CD14-positive monocyte (primary cell): ENCODE measurements at regions of chr19 and their contacts with region 1.

Region 1: GRCh38 chr19:8001995-8002849 is 3.2 kb downstream of the ELAVL1 start:
- DNase-seq: peak; percentile 79 to 87 (median 84)
- H3K4me3 ChIP-seq: peak overlapping the region; percentile 3 to 83 (median 40)
- H3K4me3 Mint-ChIP-seq: peak overlapping the region; percentile 80 to 96
- H3K27ac ChIP-seq: peak overlapping the region; percentile 65 to 77
- H3K27ac Mint-ChIP-seq: peak overlapping the region; percentile 83 to 96 (median 90)
- H3K4me1 ChIP-seq: peaks cover 28 to 45% of the 10 kb centered on the region in 2 donors
- H3K4me1 Mint-ChIP-seq: peaks cover 41% of the 10 kb centered on the region
- H3K27me3 ChIP-seq: no peaks in the 10 kb centered on the region
- H3K27me3 Mint-ChIP-seq: peaks cover 0 to 3% (median 0%) of the 10 kb centered on the region in 3 donors
- CTCF ChIP-seq: peak; percentile 96

Region 2: DNA sequence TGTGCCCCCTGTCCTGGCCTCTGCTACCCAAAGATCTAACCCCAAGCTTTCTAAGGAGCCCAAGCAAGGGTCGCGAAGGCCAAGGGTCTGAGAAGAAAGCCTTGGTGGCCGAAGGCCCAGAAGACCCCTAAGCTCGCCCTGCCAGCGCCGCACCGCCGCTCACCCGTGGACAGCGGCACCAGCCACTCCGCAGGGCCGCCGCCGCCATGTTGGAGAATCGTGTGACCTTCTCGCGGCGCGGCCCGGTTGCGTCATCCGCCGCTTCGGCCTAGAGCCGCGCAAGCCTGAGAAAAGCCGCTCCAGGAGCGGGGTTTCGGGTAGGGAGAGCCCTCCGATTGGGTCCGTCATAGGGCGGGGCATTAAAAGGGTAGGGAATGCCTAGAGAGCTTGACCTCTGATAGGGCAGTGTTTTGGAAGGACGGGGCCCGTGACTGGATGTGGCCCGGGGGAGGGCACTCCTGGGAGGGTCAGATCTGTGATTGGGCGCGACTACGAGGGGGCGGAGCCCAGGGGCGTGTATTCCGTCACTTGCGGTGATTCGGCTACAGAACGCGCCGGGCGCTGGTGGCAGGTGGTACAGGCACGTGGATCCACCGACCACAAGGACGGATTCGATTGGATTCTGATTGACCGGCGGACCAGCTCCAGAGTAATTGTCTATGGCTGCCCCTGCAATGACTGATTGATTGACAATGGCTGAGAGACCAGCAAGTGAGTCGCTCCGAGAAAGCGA is 58.6 kb before region 1 on chr19 and contains the start of gene TIMM44:
- intact Hi-C with region 1: loop called (anchors 2 to 5 kb)
- DNase-seq: peak; percentile 99 to 100 (median 99)
- H3K4me3 ChIP-seq: peak within 1 kb of the TSS; percentile 44 to 84 (median 84)
- H3K4me3 Mint-ChIP-seq: peak within 1 kb of the TSS; percentile 87 to 92
- H3K27ac ChIP-seq: peak within 1 kb of the TSS; percentile 90 to 91
- H3K27ac Mint-ChIP-seq: peak within 1 kb of the TSS; percentile 94 to 98 (median 97)
- H3K4me1 ChIP-seq: peaks cover 8 to 21% of the 10 kb centered on the region in 2 donors
- H3K4me1 Mint-ChIP-seq: peaks cover 18% of the 10 kb centered on the region
- H3K27me3 ChIP-seq: no peaks in the 10 kb centered on the region
- H3K27me3 Mint-ChIP-seq: peaks cover 0 to 3% (median 0%) of the 10 kb centered on the region in 3 donors
- CTCF ChIP-seq: no peak
- polyA plus RNA-seq, gene TIMM44: 9.5 to 33.2 (median 10.4) TPM

Region 3: GRCh38 chr19:8050274-8051096 is 48.3 kb after region 1 on chr19:
- intact Hi-C with region 1: loop called in 1 of 2 experiments (anchors 5 kb)
- DNase-seq: peak; percentile 97 to 98 (median 98)
- H3K4me3 ChIP-seq: peak overlapping the region in 2 of 3 experiments; percentile 15 to 55
- H3K4me3 Mint-ChIP-seq: peak overlapping the region; percentile 63 to 82
- H3K27ac ChIP-seq: no peak overlapping the region
- H3K27ac Mint-ChIP-seq: peak overlapping the region in 5 of 7 donors; percentile 32 to 77 (median 43)
- H3K4me1 ChIP-seq: peaks cover 21 to 28% of the 10 kb centered on the region in 2 donors
- H3K4me1 Mint-ChIP-seq: peaks cover 21% of the 10 kb centered on the region
- H3K27me3 ChIP-seq: peaks cover 0 to 4% of the 10 kb centered on the region in 2 donors
- H3K27me3 Mint-ChIP-seq: peaks cover 15 to 28% (median 19%) of the 10 kb centered on the region in 3 donors
- CTCF ChIP-seq: no peak